Ascending aorta (tissue), 2 donors: ENCODE measurements at regions of chr5 and their contacts with region 1.

Region 1: DNA sequence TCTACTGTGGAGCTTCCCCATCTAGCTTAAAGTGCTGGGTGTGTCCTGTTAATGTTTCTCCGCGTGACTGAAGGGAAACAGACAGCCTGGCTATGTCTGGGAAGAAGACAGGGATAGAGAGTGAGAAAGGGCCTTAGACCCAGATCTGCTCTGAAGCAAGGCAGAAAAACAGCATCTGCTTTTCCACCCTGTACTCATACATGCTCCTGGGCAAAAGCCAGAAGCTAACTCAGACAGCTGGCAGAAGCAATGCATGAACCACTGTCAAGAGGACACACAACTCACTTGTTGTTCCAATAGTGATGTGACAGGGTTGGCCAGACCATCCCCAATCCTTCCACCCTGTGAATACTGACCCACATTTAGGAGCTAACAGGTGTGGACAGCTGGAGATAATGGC is 63.3 kb downstream of the DPYSL3 start:
- DNase-seq: no peak
- H3K4me3 ChIP-seq: no peak overlapping the region
- H3K27ac ChIP-seq: peak overlapping the region; percentile 92 to 96
- H3K4me1 ChIP-seq: peaks cover 0 to 36% of the 10 kb centered on the region in 2 donors
- H3K27me3 ChIP-seq: no peaks in the 10 kb centered on the region
- CTCF ChIP-seq: no peak

Region 2: GRCh38 chr5:147431586-147431985 is 14.9 kb before region 1 on chr5:
- intact Hi-C with region 1: loop called (anchors 2 kb)
- DNase-seq: no peak
- H3K4me3 ChIP-seq: no peak overlapping the region
- H3K27ac ChIP-seq: peak overlapping the region; percentile 62 to 72
- H3K4me1 ChIP-seq: peaks cover 0 to 43% of the 10 kb centered on the region in 2 donors
- H3K27me3 ChIP-seq: no peaks in the 10 kb centered on the region
- CTCF ChIP-seq: no peak